ENCODE measurements at regions of chr6 and their contacts with region 1.

Region 1: GRCh38 chr6:156396068-156396771 is 381.0 kb upstream of the ARID1B start:
- DNase-seq: peak; percentile 69 to 80 (median 73)
- H3K4me3 ChIP-seq: peak overlapping the region; percentile 9 to 53
- H3K4me3 Mint-ChIP-seq: peak overlapping the region; percentile 78 to 89 (median 86)
- H3K27ac ChIP-seq: peak overlapping the region; percentile 56
- H3K27ac Mint-ChIP-seq: peak overlapping the region; percentile 90 to 100 (median 98)
- H3K4me1 ChIP-seq: peaks cover 84% of the 10 kb centered on the region
- H3K4me1 Mint-ChIP-seq: peaks cover 51 to 89% (median 75%) of the 10 kb centered on the region in 4 donors
- H3K27me3 ChIP-seq: no peaks in the 10 kb centered on the region
- H3K27me3 Mint-ChIP-seq: no peaks in the 10 kb centered on the region

Region 2: GRCh38 chr6:156167625-156168071 is 228.6 kb before region 1 on chr6:
- CTCF ChIA-PET with region 1: no interaction called
- POLR2A ChIA-PET with region 1: interaction called, 3 read pairs
- intact Hi-C with region 1: loop called (anchors 2 kb)
- DNase-seq: no peak
- H3K4me3 ChIP-seq: peak overlapping the region in 1 of 2 donors; percentile 11
- H3K4me3 Mint-ChIP-seq: peak overlapping the region in 7 of 8 donors; percentile 54 to 78 (median 68)
- H3K27ac ChIP-seq: peak overlapping the region; percentile 26
- H3K27ac Mint-ChIP-seq: peak overlapping the region; percentile 10 to 93 (median 87)
- H3K4me1 ChIP-seq: peaks cover 8% of the 10 kb centered on the region
- H3K4me1 Mint-ChIP-seq: peaks cover 15 to 43% (median 30%) of the 10 kb centered on the region in 4 donors
- H3K27me3 ChIP-seq: no peaks in the 10 kb centered on the region
- H3K27me3 Mint-ChIP-seq: no peaks in the 10 kb centered on the region

Region 3: DNA sequence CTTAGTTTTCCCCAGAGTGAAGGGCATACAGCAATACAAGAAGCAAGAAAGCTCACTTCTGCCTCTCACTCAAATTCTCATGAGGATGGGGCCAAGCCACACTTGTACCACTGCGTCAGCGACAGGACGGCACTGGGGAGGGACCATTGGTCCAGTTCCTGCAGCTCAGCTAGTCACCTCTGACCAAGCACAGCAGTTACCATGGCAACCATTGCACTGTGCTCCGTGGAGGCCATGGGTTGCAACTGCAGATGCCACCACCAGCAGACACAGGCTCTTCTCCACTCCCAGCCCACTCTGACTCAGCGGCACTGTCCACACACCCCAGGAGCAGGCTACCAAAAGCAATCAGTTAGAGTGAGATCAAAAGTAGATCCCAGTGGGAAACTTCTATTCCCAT is 60.1 kb before region 1 on chr6:
- CTCF ChIA-PET with region 1: no interaction called
- POLR2A ChIA-PET with region 1: no interaction called
- intact Hi-C with region 1: no loop called
- DNase-seq: no peak
- H3K4me3 ChIP-seq: no peak overlapping the region
- H3K4me3 Mint-ChIP-seq: no peak overlapping the region
- H3K27ac ChIP-seq: no peak overlapping the region
- H3K27ac Mint-ChIP-seq: no peak overlapping the region
- H3K4me1 ChIP-seq: no peaks in the 10 kb centered on the region
- H3K4me1 Mint-ChIP-seq: no peaks in the 10 kb centered on the region
- H3K27me3 ChIP-seq: no peaks in the 10 kb centered on the region
- H3K27me3 Mint-ChIP-seq: peaks cover 0 to 2% of the 10 kb centered on the region in 2 donors

Region 4: GRCh38 chr6:156410649-156411048 is 14.4 kb after region 1 on chr6:
- CTCF ChIA-PET with region 1: no interaction called
- POLR2A ChIA-PET with region 1: interaction called, 3 read pairs
- intact Hi-C with region 1: loop called (anchors 2 kb)
- DNase-seq: peak in 3 of 5 donors; percentile 11 to 14 (median 13)
- H3K4me3 ChIP-seq: no peak overlapping the region
- H3K4me3 Mint-ChIP-seq: no peak overlapping the region
- H3K27ac ChIP-seq: no peak overlapping the region
- H3K27ac Mint-ChIP-seq: no peak overlapping the region
- H3K4me1 ChIP-seq: no peaks in the 10 kb centered on the region
- H3K4me1 Mint-ChIP-seq: no peaks in the 10 kb centered on the region
- H3K27me3 ChIP-seq: no peaks in the 10 kb centered on the region
- H3K27me3 Mint-ChIP-seq: peaks cover 1% of the 10 kb centered on the region in 2 donors

Region 5: DNA sequence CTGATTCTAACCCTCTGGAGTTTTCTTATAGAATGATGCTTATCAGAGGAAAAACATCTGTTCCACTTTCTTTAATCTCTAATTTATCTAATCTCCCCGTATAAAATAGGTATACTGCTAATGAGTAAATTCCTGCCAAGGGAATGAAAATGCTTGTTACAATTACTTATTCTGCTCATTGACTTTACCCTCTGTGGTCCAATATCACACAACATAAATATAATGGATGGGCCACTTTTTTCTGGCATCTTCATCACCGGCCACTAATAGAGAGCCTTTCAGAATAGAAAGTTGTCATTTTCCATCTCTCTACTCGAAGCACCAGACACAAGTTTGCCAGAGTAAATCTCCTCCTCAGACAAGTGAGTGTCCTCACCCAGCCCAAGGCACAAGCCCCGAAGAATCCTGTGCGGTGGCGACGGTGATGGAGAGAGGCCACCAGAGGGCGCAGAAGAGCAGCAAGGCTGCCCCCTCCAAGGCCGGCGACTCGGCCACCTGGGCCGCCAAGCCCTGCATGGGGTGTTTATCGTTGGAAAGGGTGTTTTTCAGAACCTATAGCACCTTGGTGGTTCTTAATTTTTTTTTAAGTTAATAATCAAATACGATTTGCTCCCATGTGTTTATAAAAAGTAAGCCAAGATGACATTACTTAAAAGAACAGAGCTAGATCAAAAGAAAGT is 168.0 kb after region 1 on chr6:
- CTCF ChIA-PET with region 1: interaction called, 6 read pairs
- POLR2A ChIA-PET with region 1: no interaction called
- intact Hi-C with region 1: loop called (anchors 5 kb)
- DNase-seq: peak; percentile 58 to 66 (median 63)
- H3K4me3 ChIP-seq: no peak overlapping the region
- H3K4me3 Mint-ChIP-seq: peak overlapping the region in 1 of 8 donors; percentile 12
- H3K27ac ChIP-seq: no peak overlapping the region
- H3K27ac Mint-ChIP-seq: peak overlapping the region in 1 of 7 donors; percentile 24
- H3K4me1 ChIP-seq: peaks cover 7% of the 10 kb centered on the region
- H3K4me1 Mint-ChIP-seq: peaks cover 0 to 4% (median 1%) of the 10 kb centered on the region in 4 donors
- H3K27me3 ChIP-seq: no peaks in the 10 kb centered on the region
- H3K27me3 Mint-ChIP-seq: peaks cover 6 to 13% of the 10 kb centered on the region in 2 donors

Region 6: DNA sequence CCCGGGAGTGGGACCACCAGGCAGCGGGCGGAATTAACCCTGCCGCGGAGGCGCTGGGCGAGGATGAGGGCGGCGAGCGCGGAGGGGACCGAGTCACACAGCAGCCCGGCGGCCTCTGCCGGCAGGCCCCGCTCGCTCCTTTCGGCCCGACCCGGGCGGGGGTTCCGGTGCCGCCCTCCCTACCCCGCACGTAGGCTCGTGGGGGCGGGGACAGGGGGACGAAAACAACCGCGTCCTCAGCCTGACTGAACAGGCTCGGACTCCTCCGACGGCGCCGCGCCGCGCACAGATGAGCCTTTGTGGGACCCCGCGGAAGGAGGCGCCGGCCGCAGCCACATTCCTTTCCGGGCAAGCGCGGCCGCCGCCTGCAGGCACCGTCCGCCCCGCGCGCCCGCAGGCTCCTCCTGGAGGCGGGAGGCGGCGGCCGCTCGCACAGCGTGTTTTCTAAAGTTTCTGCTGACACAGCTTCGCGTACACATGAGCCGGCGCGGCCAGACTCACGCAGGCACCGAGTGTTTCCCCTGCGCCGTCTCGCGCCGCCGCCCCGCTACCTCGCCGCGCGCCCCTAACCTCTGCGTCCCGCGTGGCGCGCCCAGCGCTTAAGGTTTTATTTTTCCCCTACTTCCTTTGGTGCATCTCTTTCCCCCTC is 625.2 kb after region 1 on chr6:
- CTCF ChIA-PET with region 1: no interaction called
- POLR2A ChIA-PET with region 1: interaction called, 15 read pairs
- intact Hi-C with region 1: loop called (anchors 1 kb)
- DNase-seq: peak; percentile 88 to 93 (median 91)
- H3K4me3 ChIP-seq: peak overlapping the region; percentile 54 to 86
- H3K4me3 Mint-ChIP-seq: peak overlapping the region; percentile 95 to 98 (median 96)
- H3K27ac ChIP-seq: peak overlapping the region; percentile 98
- H3K27ac Mint-ChIP-seq: peak overlapping the region; percentile 97 to 100 (median 99)
- H3K4me1 ChIP-seq: peaks cover 31% of the 10 kb centered on the region
- H3K4me1 Mint-ChIP-seq: peaks cover 30 to 55% (median 44%) of the 10 kb centered on the region in 4 donors
- H3K27me3 ChIP-seq: no peaks in the 10 kb centered on the region
- H3K27me3 Mint-ChIP-seq: no peaks in the 10 kb centered on the region

Measured in CD4-positive, alpha-beta memory T cell (primary cell).